ENCODE measurements at regions of chr11 and their contacts with region 1.

Region 1: GRCh38 chr11:8263769-8264410 is at the start of gene LMO1:
- DNase-seq: peak; percentile 81 to 96
- ATAC-seq: peak; percentile 79
- H3K4me3 ChIP-seq: peak within 1 kb of the TSS; percentile 23 to 45
- H3K27ac ChIP-seq: no peak within 1 kb of the TSS
- H3K4me1 ChIP-seq: no peaks in the 10 kb centered on the region
- H3K27me3 ChIP-seq: no peaks in the 10 kb centered on the region
- total RNA-seq, gene LMO1: not detected

Region 2: DNA sequence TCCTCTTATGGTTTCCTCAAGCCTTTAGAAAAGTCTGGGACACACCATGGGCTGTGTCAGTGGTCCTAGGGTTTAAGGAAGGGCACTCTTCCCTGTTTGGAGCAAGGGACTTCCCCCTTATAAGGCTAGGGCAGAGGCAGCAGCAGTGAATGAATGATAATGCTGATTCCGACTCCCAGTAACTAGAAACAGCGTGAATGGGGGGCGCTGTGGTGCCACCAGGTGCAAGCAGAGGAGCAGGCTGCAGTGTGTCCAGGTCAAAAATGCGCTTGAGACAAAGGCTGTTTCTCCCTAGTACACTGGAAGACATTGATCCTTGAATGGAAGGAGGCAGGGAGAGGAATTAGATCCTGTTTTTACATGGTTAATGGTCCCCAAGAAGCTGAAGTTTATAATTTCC is 83.4 kb before region 1 on chr11:
- intact Hi-C with region 1: no loop called
- DNase-seq: no peak
- ATAC-seq: no peak
- H3K4me3 ChIP-seq: no peak overlapping the region
- H3K27ac ChIP-seq: no peak overlapping the region
- H3K4me1 ChIP-seq: no peaks in the 10 kb centered on the region
- H3K27me3 ChIP-seq: no peaks in the 10 kb centered on the region

Region 3: DNA sequence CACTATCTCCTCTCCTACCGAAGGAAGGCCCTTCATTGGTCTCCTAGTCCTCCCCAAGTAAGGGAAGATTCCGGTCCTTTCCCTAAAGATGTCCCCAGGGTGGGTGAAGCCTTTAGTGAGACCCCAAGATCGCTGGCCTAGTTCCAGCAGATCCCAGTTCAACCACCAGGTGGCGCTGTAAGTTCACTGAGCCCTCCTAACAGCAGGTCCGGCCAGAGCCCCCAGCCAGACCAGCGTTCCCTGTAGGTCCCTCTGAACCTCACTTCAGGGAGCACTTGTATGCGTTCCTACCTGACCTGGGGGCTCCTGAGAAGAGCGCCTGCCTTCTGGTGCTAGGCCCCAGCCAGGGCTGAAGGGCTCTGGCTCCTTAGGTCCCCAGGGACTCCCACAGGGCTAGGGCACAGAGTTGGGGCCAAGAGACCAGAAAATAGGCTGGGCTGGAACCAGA is 38.3 kb before region 1 on chr11:
- intact Hi-C with region 1: loop called (anchors 1 to 5 kb)
- DNase-seq: peak; percentile 72 to 89
- ATAC-seq: peak; percentile 53
- H3K4me3 ChIP-seq: no peak overlapping the region
- H3K27ac ChIP-seq: no peak overlapping the region
- H3K4me1 ChIP-seq: no peaks in the 10 kb centered on the region
- H3K27me3 ChIP-seq: no peaks in the 10 kb centered on the region